AG04450 (cell line): ENCODE measurements at regions of chr1 and their contacts with region 1.

Region 1: DNA sequence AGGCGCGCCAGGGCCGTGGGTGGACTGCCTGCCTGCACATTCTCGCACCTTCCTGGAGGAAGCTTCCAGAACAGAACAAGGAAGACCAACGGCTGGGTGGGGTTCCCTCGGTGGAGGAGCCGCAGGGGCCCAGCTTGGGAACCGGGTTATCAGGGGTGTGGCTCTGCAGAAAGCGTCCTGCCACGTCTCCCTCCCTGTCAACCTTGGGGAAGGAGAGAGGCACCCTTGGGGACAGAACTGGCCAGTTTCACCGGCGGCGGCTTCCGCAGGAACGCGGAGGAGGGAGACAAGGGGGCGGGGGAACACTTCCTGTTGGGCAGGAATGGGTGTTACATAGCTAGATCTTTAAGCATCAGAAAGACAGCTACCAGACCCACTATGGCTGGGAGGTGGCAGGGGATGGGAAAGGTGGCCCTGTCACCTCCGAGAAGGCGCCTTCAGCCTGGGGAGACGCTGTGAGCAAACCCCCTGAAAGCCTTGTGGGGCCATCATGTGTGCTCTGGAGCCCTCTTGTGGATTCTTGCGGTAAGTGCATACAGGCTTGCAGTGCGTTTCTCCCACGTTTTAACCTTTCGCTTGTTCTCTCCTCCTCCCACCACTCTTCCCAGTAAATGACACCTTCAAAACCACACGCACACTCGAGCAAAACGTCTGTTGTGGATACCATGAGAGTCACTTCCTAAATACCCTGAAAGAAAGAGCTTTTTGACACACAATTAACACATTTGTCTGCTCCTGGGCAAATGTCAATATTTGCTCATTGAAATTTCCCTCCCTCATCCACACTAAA is 3.8 kb upstream of the PLEKHA6 start:
- DNase-seq: peak; percentile 29
- H3K4me3 ChIP-seq: peak overlapping the region; percentile 52
- H3K27ac ChIP-seq: peak overlapping the region; percentile 47
- H3K27me3 ChIP-seq: peaks cover 18% of the 10 kb centered on the region
- CTCF ChIP-seq: peak; percentile 99

Region 2: DNA sequence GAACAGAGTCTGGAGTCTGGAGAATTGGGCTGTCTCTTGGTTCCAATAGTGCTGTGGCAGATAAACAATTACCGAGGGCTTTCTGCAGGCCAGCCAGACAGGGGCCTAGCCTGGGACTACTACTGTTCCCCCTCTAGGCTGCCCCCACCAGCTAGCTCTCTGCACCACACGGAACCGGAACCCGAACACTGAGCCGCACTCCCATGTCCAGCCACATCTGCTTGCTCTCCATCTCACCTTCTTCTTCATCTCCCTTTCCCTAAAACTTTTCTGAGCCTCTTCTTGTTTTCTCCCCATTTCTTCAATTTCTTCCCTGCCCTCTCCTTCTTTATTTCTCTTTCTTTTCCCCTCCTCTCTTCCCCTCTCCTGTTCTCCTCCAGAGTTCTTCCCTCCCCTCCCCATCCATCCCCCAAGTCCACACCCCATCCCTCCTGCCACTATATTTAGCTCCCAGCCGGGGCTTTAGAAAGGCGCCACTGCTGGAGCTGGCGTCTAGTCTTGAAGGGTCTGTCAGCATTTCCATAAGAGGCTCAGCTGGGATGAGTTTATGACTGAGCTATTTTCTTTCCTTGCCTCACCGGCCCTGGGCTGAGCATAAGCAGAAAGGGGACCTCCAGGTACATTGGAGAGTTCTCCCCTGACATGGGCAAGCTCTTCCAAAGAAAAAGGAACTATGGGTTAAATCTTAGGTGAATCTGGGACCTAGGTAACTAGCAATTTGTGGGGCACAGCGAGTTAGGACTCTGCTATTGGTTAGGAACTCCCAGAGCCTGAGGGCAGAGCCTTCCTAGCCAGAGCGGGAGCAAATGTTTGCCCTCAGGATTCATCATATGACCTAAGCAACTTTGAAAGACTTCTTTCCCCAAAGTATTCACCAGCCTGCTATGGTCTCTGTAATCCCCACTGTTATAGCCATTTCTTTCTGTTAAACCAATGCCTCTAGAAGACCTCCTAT is 762.5 kb before region 1 on chr1:
- CTCF ChIA-PET with region 1: no interaction called
- POLR2A ChIA-PET with region 1: no interaction called
- DNase-seq: no peak
- H3K4me3 ChIP-seq: no peak overlapping the region
- H3K27ac ChIP-seq: no peak overlapping the region
- H3K27me3 ChIP-seq: no peaks in the 10 kb centered on the region
- CTCF ChIP-seq: no peak

Region 3: DNA sequence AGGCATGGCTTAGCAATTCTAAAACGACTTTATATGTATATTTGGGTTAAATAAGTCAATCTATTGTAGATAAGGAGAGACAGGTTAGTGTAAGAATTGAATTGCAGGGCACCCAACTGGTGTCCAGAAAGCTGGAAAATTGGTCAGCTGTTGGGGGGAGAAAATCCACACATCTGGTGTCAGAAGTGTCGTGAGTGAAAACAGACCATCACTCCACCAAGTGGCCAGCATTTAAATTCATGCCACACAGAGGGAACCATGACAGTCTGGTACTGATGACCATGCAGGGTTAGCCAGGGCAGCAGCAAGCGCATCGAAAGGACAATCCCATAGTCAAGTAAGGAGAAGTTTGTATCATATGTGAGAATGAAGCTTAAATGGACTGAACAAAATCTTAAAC is 586.9 kb before region 1 on chr1:
- CTCF ChIA-PET with region 1: no interaction called
- POLR2A ChIA-PET with region 1: no interaction called
- DNase-seq: no peak
- H3K4me3 ChIP-seq: no peak overlapping the region
- H3K27ac ChIP-seq: no peak overlapping the region
- H3K27me3 ChIP-seq: peaks cover 3% of the 10 kb centered on the region
- CTCF ChIP-seq: 0 out of 2 replicates have a peak, but pooled peaks have one; percentile 2

Region 4: DNA sequence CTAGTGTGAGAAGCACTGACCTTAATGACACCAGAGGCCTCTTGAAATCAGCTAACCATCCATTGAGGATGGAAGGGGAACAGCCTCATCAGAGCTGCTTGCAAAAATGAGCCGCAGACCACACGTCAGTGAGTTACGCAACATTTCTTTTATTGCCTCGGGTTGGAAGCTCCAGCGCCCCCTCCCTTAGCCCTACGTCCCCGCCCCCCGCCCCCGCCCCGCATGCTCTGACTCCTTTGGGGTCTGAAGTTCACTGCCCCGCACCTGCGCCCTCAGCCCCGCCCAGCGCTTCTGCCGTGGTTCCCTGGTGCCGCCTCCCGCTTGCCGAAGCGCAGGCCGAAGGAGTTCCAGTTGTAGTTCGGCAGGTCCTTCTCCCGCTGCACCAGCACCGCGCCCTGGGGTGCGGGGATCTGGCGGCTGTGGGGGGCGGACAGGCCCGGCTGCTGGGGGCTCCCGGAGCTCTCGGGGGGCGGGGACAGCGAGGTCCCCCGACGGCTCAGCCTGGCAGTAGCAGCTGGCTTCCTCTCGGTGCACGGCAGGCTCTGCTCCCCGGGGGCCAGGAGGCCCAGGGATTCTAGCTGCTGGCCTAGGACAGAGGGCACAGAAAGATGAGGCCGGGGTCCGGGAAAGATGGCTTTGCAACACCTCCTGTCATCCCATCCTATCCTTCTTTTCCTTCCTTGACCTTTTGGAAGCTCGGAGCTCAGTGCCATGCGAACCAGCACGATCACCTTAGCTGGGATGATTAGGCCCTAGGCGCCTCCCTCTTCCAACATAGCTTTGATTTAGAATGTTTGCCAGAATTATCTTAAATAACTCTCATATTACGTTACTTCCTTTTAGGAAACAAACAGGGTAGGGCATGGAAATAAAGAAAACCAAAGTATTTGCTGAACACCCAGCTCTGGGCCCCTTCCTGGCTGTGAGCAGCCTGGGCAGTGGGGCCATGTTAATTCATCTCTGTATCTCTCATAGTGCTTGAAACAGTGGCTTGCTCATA is 173.0 kb before region 1 on chr1:
- CTCF ChIA-PET with region 1: interaction called, 13 read pairs
- POLR2A ChIA-PET with region 1: no interaction called
- DNase-seq: no peak
- H3K4me3 ChIP-seq: peak overlapping the region; percentile 17; the same call in 1 of the 2 replicates
- H3K27ac ChIP-seq: no peak overlapping the region
- H3K27me3 ChIP-seq: peaks cover 6% of the 10 kb centered on the region
- CTCF ChIP-seq: no peak

Region 5: GRCh38 chr1:204227351-204227750 is 136.2 kb before region 1 on chr1:
- CTCF ChIA-PET with region 1: interaction called, 21 read pairs
- POLR2A ChIA-PET with region 1: no interaction called
- DNase-seq: no peak
- H3K4me3 ChIP-seq: no peak overlapping the region
- H3K27ac ChIP-seq: no peak overlapping the region
- H3K27me3 ChIP-seq: no peaks in the 10 kb centered on the region
- CTCF ChIP-seq: no peak

Region 6: DNA sequence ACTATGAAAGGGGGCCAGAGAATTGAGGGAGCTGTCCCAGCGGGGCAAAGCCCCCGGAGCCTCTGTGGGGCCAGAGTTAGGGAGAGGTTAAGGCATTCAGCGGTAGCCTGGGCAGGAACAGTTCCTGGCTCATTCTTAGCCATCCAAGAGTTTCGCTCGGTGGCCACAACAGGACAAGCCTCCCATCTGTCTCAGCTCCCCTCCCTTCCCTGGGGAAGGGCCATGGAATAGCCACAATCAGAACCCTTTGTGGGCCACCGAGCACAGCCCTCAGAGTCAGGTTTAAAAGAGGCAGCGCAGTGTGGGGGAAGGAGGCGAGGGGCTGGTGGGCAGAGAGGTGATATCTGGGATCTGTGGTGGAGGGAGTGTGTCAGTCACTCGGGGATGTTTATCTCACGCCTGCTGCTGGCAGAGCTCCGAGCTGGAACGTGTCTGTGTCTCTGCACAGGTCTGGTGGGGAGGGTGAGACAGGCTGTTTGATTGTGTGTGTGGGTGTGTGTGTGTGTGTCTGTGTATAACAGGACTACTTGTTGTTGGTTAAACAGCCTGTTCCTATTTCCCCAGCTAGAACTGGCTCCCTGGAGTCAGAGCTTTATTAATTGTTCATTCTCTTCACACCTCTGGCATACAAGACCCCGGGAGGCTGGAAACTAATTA is 100.1 kb before region 1 on chr1:
- CTCF ChIA-PET with region 1: interaction called, 187 read pairs
- POLR2A ChIA-PET with region 1: no interaction called
- DNase-seq: no peak
- H3K4me3 ChIP-seq: no peak overlapping the region
- H3K27ac ChIP-seq: no peak overlapping the region
- H3K27me3 ChIP-seq: no peaks in the 10 kb centered on the region
- CTCF ChIP-seq: no peak

Region 7: GRCh38 chr1:204341380-204341779 is 22.1 kb before region 1 on chr1:
- CTCF ChIA-PET with region 1: interaction called, 21 read pairs
- POLR2A ChIA-PET with region 1: no interaction called
- DNase-seq: no peak
- H3K4me3 ChIP-seq: no peak overlapping the region
- H3K27ac ChIP-seq: no peak overlapping the region
- H3K27me3 ChIP-seq: peaks cover 3% of the 10 kb centered on the region
- CTCF ChIP-seq: no peak

Region 8: DNA sequence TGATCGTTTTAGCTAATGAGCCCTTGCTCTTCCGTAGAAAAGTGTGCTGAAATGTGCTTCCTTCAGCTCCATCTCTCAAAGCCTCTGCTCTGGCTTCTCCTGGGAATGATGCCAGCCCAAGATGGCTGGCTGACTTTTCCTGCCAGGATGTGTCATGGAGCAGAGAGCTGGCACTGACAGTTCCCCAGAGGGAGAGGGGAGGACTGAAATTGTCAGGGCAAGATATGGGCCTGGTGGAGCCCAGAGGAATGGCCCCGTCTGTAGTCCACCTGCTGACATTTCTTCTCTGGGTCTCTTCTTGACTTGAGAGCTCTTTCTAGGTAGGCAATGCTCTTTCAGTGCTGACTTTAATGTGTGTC is 21.4 kb after region 1 on chr1:
- CTCF ChIA-PET with region 1: interaction called, 14 read pairs
- POLR2A ChIA-PET with region 1: no interaction called
- DNase-seq: no peak
- H3K4me3 ChIP-seq: no peak overlapping the region
- H3K27ac ChIP-seq: no peak overlapping the region
- H3K27me3 ChIP-seq: peaks cover 24% of the 10 kb centered on the region
- CTCF ChIP-seq: no peak

Region 9: DNA sequence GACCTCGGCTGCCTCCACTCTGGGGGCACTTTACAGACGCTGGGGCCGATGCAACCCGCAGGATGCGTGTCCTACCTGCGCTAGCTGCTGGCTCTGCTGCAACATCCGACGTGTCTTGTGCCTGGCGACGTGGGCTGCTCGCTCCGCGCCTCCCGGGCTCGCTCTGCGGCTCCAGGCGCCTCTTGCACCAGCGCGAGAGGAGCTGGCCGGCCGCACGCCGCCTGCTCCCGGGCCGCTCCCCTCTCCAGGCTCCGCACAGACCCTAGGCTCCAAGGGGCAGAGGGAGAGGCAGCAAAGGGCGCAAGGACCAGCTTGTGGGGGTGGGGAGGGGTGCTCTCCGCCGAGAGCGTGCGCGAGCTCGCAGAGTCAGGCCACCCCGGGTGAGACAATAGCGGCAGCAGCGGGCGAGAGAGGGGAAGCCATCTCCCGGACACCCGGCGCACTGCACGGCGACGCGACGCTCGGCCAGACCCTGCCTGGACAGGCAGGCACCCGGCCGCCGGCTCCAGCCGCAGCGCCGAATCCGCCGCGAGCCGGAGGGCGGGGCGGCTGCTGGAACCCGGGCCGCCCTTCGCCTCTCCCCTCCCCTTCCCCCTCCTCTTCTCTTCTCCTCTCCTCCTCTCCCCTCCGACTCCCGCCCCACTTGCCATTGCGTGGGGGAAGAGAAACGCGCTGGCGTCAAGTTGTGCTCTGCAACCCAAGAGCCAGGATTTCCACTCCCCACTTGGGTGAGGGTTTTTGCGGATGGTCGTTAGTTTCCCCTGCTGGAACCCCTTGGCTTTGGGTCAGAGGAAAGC is 130.9 kb after region 1 on chr1 and contains the start of gene PIK3C2B:
- CTCF ChIA-PET with region 1: no interaction called
- POLR2A ChIA-PET with region 1: no interaction called
- DNase-seq: peak; percentile 33
- H3K4me3 ChIP-seq: peak within 1 kb of the TSS; percentile 87
- H3K27ac ChIP-seq: peak within 1 kb of the TSS; percentile 70
- H3K27me3 ChIP-seq: peaks cover 8% of the 10 kb centered on the region
- CTCF ChIP-seq: peak; percentile 34; the same call in 1 of the 2 replicates
- polyA plus RNA-seq, gene PIK3C2B: 4.9 and 6.3 TPM in 2 replicates